Naive thymus-derived CD4-positive, alpha-beta T cell (primary cell): ENCODE measurements at regions of chr9 and their contacts with region 1.

Region 1: DNA sequence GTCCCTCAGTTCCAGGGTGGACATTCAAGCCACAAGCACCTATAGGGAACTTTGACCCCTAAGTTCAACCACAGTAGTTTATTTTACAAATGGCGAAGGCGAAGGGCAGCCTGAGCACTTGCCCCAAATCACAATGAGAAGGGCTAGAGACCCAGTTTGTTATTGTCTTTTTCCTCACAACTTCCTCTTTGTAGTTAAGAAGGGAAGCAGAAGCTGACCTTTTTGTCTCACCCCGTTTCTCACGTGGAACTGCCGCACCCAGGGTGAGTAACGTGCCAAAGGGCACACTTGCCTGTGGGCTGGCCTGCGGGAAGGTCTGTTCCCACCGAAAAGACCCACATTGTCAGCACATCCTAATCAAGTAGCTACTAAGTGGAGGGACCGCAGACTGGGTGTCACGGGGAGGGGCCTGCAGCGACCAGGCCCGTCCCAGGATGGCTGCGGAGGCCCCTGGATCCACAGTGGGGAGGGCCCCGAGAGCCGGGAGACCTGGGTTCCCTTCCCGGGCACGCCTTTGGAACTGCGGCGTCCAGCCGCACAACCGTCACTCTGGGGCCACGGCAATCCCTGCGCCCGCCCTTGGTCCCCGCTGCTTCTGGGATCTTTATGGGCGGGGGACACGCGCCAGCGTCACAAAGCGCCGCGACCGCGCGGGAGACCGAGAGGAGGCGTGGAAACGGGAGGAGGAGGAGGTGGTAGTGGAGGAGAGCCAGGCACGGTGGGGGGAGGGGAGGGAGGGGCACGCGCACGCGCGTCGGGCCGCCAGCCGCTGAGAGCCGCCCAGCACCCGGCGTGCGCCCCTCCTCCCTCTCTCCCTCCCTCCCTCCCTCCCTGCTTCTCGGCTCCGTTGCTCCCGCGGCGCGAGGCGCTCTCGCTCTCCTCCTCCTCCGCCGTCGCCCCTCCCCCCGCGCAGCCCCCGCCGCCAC is at the start of gene UBE2R2:
- DNase-seq: peak; percentile 81 to 94 (median 90)
- ATAC-seq: peak; percentile 86
- H3K4me3 ChIP-seq: peak within 1 kb of the TSS; percentile 88
- H3K4me3 Mint-ChIP-seq: peak within 1 kb of the TSS; percentile 83 to 98 (median 93)
- H3K27ac ChIP-seq: peak within 1 kb of the TSS; percentile 96
- H3K27ac Mint-ChIP-seq: peak within 1 kb of the TSS; percentile 91 to 99 (median 97)
- H3K4me1 ChIP-seq: peaks cover 19 to 21% of the 10 kb centered on the region in 2 donors
- H3K4me1 Mint-ChIP-seq: peaks cover 24 to 60% (median 54%) of the 10 kb centered on the region in 7 donors
- H3K27me3 ChIP-seq: no peaks in the 10 kb centered on the region
- H3K27me3 Mint-ChIP-seq: no peaks in the 10 kb centered on the region
- total RNA-seq, gene UBE2R2: 27.2 to 40.8 (median 32.0) TPM

Region 2: DNA sequence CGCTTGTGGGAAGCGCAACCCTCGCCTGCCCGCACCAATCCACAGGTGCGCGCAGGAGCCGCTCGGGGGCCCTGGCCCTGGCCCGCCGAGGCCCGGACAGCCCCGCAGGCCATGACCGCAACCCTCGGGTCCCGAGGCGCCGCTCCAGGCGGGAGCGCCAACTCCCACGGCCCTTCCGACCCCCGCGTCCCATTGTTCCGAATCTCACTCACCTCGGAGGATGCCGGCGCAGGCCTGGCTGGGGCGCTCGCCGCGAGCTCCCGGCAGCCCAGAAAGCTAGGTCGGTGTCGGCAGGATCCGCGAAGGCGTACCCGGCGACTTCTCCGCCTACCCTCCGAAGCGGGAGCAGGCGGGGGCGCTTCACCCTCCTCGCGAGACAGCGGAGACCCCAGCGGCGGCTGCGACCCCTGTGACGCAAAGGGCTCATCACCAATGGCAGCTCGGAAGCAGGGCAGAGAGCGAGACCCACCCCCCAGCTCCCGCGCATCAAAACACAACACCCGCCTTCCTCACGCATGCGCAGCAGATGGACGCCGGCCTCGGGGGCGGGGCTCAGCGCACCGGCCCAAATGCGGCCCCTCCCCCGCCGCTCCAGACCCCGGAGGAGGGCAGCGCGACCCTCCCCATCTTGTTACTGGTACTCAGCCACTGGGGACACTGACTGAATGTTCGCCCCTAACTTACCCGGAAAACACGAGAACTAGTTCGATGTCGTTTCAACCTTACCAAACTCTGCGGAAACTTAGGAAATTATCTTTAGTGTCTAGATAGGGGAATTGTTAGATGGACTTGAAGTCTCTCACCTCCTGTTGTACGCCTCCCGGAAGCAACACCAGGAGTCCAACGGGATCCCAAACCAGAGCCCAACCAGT is 1265.8 kb before region 1 on chr9:
- CTCF ChIA-PET with region 1: no interaction called
- POLR2A ChIA-PET with region 1: no interaction called
- intact Hi-C with region 1: loop called in 1 of 2 experiments (anchors 5 kb)
- DNase-seq: peak; percentile 89 to 99 (median 96)
- ATAC-seq: peak; percentile 90
- H3K4me3 ChIP-seq: peak overlapping the region; percentile 93
- H3K4me3 Mint-ChIP-seq: peak overlapping the region; percentile 92 to 100 (median 99)
- H3K27ac ChIP-seq: peak overlapping the region; percentile 97
- H3K27ac Mint-ChIP-seq: peak overlapping the region; percentile 96 to 100 (median 98)
- H3K4me1 ChIP-seq: peaks cover 13 to 20% of the 10 kb centered on the region in 2 donors
- H3K4me1 Mint-ChIP-seq: peaks cover 31 to 70% (median 56%) of the 10 kb centered on the region in 7 donors
- H3K27me3 ChIP-seq: no peaks in the 10 kb centered on the region
- H3K27me3 Mint-ChIP-seq: no peaks in the 10 kb centered on the region

Region 3: DNA sequence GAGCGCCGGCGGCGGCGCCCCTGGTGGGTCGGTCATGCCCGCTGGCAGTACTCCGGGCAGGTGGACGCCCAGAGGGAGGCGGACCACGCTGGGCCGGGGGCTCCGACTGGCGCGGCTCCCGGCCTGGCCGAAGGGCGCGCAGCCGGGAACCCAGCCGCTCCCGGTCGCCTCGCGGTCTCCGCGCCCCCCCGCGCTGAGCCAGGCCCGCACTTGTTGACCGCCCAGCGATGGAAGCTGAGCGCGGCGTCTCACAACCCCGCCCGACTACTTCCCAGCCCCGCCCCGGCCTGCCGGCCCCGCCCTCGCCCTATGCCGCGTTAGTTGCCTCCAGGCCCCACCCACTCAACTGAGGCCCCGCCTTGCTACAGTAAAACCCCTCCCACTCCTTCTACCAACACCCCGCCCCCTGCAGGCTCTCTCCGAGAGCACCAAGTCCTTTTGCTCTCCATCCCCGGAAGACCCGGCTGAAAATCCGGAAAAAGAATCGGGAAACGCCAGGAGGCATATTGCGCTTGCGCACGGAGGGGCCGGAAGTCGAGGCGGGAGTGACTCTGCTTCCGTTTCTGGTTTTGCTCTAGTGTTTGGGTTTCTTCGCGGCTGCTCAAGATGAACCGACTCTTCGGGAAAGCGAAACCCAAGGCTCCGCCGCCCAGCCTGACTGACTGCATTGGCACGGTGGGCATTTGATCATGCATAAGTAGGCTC is 552.0 kb before region 1 on chr9 and contains the starts of genes BAG1 and CHMP5:
- CTCF ChIA-PET with region 1: no interaction called
- POLR2A ChIA-PET with region 1: no interaction called
- intact Hi-C with region 1: loop called in 1 of 2 experiments (anchors 1 kb)
- DNase-seq: peak; percentile 98 to 100 (median 100)
- ATAC-seq: peak; percentile 99
- H3K4me3 ChIP-seq: peak within 1 kb of the TSS; percentile 95
- H3K4me3 Mint-ChIP-seq: peak within 1 kb of the TSS; percentile 82 to 98 (median 92)
- H3K27ac ChIP-seq: peak within 1 kb of the TSS; percentile 88
- H3K27ac Mint-ChIP-seq: peak within 1 kb of the TSS; percentile 84 to 99 (median 97)
- H3K4me1 ChIP-seq: peaks cover 15 to 34% of the 10 kb centered on the region in 2 donors
- H3K4me1 Mint-ChIP-seq: peaks cover 36 to 66% (median 55%) of the 10 kb centered on the region in 7 donors
- H3K27me3 ChIP-seq: no peaks in the 10 kb centered on the region
- H3K27me3 Mint-ChIP-seq: peaks cover 0 to 2% (median 0%) of the 10 kb centered on the region in 5 donors
- total RNA-seq, gene BAG1: 48.6 to 77.2 (median 61.0) TPM
- total RNA-seq, gene CHMP5: 21.4 to 74.6 (median 35.3) TPM

Region 4: DNA sequence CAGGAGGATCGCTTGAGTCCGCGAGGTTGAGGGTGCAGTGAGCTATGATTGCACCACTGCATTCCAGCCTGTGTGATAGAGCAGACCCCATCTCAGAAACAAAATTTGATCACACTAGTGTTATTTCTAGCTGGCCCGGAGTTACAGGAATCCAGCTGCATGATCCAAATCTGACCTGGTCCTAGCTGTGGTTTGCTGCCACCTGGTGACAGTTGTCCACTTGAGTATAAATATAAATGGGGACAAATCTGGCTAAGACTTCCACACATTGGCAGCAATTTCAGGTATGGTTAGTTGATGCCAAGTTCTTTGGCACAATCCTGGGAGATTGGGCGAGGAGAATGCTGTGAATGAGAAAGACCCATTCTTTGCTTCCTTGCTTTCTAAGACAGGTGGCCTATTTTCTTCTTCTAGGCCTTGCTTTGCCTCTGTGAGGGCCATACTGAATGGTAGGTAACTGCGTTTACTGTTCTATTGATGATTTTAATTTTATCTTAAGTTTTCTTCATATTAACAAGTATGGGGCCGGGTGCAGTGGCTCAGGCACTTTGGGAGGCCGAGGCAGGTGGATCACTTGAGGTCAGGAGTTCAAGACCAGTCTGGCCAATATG is 35.7 kb after region 1 on chr9:
- CTCF ChIA-PET with region 1: interaction called, 87 read pairs
- POLR2A ChIA-PET with region 1: interaction called, 8 read pairs
- intact Hi-C with region 1: loop called (anchors 1 kb)
- DNase-seq: peak in 8 of 9 donors; percentile 20 to 53 (median 46)
- ATAC-seq: peak; percentile 85
- H3K4me3 ChIP-seq: no peak overlapping the region
- H3K4me3 Mint-ChIP-seq: no peak overlapping the region
- H3K27ac ChIP-seq: no peak overlapping the region
- H3K27ac Mint-ChIP-seq: peak overlapping the region in 3 of 9 donors; percentile 72 to 86 (median 80)
- H3K4me1 ChIP-seq: peaks cover 0 to 2% of the 10 kb centered on the region in 2 donors
- H3K4me1 Mint-ChIP-seq: peaks cover 16 to 60% (median 50%) of the 10 kb centered on the region in 7 donors
- H3K27me3 ChIP-seq: no peaks in the 10 kb centered on the region
- H3K27me3 Mint-ChIP-seq: no peaks in the 10 kb centered on the region

Region 5: DNA sequence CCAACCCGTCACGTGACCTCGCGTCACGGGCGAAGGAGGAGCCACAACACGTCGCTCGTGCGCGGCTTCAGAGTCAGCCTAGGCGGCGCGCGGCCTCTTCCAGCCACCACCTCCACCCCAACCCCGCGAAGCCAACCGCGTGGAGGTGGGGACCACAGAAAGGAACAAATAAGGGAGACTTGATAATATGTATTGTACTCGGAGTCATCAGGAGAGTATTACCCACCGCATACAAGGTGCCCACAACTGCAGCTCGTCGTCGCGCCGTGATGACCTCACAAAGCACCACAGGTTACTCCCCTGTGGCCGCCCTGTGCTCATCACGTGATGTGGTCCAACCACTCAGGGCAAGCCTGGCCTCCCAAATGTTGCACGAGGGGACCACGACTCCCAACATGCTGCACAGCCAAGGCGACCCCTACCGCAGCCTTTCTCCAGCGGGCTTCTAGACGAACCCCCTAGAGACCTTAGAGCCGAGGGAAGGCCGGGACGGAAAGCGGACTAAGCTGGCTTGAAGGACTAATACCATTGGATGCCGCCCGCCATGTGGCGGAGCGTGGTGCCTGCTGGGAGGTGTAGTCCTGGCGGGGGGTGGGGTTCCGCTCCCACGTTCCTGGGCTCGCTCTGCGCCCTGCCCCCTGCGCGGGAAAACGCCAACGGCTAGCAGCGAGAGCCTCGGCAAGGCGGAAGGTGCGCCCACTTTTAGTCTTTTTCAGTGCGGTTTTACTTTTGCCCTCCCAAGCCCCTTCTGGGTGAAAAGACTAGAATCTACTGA is 232.5 kb after region 1 on chr9:
- CTCF ChIA-PET with region 1: interaction called, 4 read pairs
- POLR2A ChIA-PET with region 1: interaction called, 4 read pairs
- intact Hi-C with region 1: loop called (anchors 1 kb)
- DNase-seq: peak; percentile 96 to 99 (median 97)
- ATAC-seq: peak; percentile 93
- H3K4me3 ChIP-seq: peak overlapping the region; percentile 98
- H3K4me3 Mint-ChIP-seq: peak overlapping the region; percentile 96 to 100 (median 98)
- H3K27ac ChIP-seq: peak overlapping the region; percentile 86
- H3K27ac Mint-ChIP-seq: peak overlapping the region; percentile 98 to 100 (median 99)
- H3K4me1 ChIP-seq: peaks cover 11 to 22% of the 10 kb centered on the region in 2 donors
- H3K4me1 Mint-ChIP-seq: peaks cover 25 to 55% (median 31%) of the 10 kb centered on the region in 7 donors
- H3K27me3 ChIP-seq: no peaks in the 10 kb centered on the region
- H3K27me3 Mint-ChIP-seq: peaks cover 0 to 4% (median 0%) of the 10 kb centered on the region in 5 donors

Region 6: GRCh38 chr9:34178520-34179212 is 362.1 kb after region 1 on chr9 and contains the start of gene UBAP1:
- CTCF ChIA-PET with region 1: no interaction called
- POLR2A ChIA-PET with region 1: no interaction called
- intact Hi-C with region 1: loop called (anchors 2 kb)
- DNase-seq: peak; percentile 83 to 97 (median 93)
- ATAC-seq: peak; percentile 99
- H3K4me3 ChIP-seq: peak within 1 kb of the TSS; percentile 93
- H3K4me3 Mint-ChIP-seq: peak within 1 kb of the TSS; percentile 93 to 100 (median 96)
- H3K27ac ChIP-seq: peak within 1 kb of the TSS; percentile 97
- H3K27ac Mint-ChIP-seq: peak within 1 kb of the TSS; percentile 94 to 99 (median 98)
- H3K4me1 ChIP-seq: peaks cover 0 to 8% of the 10 kb centered on the region in 2 donors
- H3K4me1 Mint-ChIP-seq: peaks cover 7 to 33% (median 21%) of the 10 kb centered on the region in 7 donors
- H3K27me3 ChIP-seq: no peaks in the 10 kb centered on the region
- H3K27me3 Mint-ChIP-seq: no peaks in the 10 kb centered on the region
- total RNA-seq, gene UBAP1: 31.1 to 39.9 (median 32.8) TPM

Region 7: DNA sequence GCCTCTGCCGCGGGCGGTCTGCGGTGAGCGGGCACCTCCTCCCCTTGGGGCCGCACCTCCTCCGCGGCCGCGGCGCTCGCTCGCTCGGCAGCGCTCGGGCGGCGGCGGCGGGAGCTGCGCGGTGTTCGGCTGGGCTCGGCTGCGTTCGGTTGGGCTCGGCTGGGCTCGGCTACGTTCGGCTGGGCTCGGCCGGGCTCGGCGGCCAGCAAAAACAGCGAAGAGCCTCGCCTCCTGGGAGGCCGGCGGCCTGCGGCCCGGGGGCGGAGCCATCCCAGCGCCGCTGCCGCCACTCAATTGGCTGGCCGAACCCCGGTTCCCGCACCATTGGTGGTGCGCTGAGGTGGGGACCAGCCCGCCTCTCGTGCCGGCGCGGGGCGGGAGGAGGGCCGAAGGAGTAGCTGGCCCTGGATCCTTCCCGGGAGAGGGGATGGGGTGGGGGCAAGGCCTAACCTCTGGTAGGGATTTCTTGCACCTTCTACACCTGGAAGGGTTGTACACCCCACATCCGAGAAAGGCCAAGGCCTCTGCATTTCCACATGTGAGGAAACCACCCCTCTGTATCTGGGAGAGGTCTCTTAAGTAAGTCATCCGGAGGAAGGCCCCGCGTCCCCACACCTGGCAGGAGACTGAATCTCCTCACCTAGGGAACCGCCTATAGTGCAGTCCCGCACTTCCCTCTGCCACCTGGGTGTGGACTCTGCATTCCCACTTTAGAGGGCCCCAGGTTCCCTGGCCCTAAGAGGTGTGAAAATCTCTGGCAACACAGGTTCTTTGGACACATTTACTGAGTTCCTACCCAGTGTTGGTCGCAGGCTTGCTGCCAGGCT is 706.6 kb after region 1 on chr9 and contains the start of gene ENHO:
- CTCF ChIA-PET with region 1: no interaction called
- POLR2A ChIA-PET with region 1: no interaction called
- intact Hi-C with region 1: loop called in 1 of 2 experiments (anchors 10 kb)
- DNase-seq: peak; percentile 77 to 97 (median 91)
- ATAC-seq: peak; percentile 97
- H3K4me3 ChIP-seq: peak within 1 kb of the TSS; percentile 66
- H3K4me3 Mint-ChIP-seq: peak within 1 kb of the TSS; percentile 70 to 83 (median 78)
- H3K27ac ChIP-seq: peak within 1 kb of the TSS; percentile 61
- H3K27ac Mint-ChIP-seq: peak within 1 kb of the TSS in 7 of 9 donors; percentile 18 to 79 (median 61)
- H3K4me1 ChIP-seq: peaks cover 7 to 10% of the 10 kb centered on the region in 2 donors
- H3K4me1 Mint-ChIP-seq: peaks cover 5 to 19% (median 10%) of the 10 kb centered on the region in 7 donors
- H3K27me3 ChIP-seq: no peaks in the 10 kb centered on the region
- H3K27me3 Mint-ChIP-seq: peaks cover 0 to 55% (median 8%) of the 10 kb centered on the region in 5 donors
- total RNA-seq, gene ENHO: 0.56 to 1.9 TPM in 2 of 5 experiments, not detected in the others